ENCODE measurements at regions of chr5 and their contacts with region 1.

Region 1: DNA sequence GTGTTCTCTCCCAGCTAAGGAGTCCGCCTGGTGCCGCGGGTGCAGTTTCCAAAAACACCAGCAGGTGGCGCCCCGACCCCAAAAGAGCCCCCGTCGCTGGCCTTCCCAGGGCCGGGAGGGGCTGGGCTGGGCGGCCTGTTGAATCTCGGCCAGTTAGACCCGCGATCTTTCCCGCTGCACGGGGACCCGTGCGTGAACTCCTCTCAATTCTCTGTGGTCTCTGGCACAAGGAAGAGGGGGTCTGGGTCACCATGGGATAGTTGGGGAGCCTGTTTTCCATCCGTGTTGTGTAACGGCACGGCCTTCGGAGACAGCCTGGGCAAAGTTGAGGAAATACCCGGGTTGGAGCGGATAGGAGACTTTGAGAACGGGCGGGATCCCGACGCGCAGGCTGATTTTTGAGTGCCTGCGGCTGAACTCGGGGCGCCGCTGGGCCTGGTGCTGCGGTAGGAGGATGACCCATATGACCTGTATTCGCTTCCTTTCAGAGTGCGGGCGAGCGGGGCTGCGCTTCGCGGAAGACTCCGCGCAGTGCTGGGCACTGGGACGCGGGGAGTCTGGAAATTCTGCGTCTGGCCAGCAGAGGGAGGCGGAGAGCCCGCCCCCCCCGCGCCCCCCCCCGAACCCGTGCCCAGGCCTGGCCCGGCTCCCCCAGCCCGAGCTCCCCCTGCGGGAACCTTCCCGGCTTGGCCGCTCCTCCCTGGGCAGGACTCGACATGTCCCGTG is 7.9 kb upstream of the PSD2 start:
- DNase-seq: peak; percentile 65 to 83
- ATAC-seq: peak; percentile 77 to 79
- H3K4me3 ChIP-seq: peak overlapping the region; percentile 64 to 90 (median 67)
- H3K27ac ChIP-seq: peak overlapping the region; percentile 84 to 92 (median 88)
- H3K4me1 ChIP-seq: peaks cover 14 to 17% of the 10 kb centered on the region in 2 donors
- H3K27me3 ChIP-seq: no peaks in the 10 kb centered on the region
- CTCF ChIP-seq: peak; percentile 89 to 99 (median 97)
- POLR2A ChIP-seq: no peak

Region 2: DNA sequence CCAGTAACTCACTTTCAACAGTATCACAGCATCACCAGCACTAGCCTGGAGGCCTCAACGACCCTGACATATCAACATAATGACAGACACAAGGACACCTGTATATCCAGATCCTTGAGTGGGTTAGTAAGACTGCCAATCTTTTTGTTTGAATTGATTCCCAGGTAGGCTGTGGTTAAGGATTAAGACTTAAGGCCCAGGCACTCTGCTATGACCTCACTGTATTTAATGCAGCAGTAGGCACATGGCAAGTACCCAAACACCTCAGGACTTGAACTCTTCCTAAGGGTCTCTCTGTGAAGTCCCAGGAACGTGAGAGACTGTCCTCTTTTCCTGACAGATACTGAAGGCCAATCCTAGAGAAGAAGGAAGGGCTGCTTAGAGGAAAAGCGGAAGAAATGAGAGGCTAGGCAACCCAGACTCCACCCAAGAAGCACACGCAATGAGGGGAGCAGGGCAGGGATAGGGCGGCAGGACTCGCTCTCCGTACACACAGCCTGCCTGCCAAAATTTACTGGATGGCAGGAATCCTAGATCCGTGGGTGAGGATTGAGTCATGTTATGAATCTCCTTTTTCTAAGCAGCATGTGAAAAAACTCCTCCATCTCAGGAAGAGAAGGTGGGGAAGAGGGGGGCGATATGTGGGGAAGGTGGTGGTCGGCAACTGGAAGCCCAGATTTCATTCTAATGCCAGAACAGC is 683.0 kb before region 1 on chr5:
- in situ Hi-C with region 1: no loop called
- intact Hi-C with region 1: no loop called
- DNase-seq: peak; percentile 45 to 69
- ATAC-seq: peak; percentile 69 to 76
- H3K4me3 ChIP-seq: no peak overlapping the region
- H3K27ac ChIP-seq: peak overlapping the region; percentile 24 to 72 (median 64)
- H3K4me1 ChIP-seq: peaks cover 35 to 60% of the 10 kb centered on the region in 2 donors
- H3K27me3 ChIP-seq: no peaks in the 10 kb centered on the region
- CTCF ChIP-seq: no peak
- POLR2A ChIP-seq: no peak

Region 3: GRCh38 chr5:139849942-139850341 is 62.2 kb after region 1 on chr5:
- in situ Hi-C with region 1: loop called in 1 of 4 experiments (anchors 10 kb)
- intact Hi-C with region 1: no loop called
- DNase-seq: no peak
- ATAC-seq: no peak
- H3K4me3 ChIP-seq: no peak overlapping the region
- H3K27ac ChIP-seq: peak overlapping the region in 2 of 4 donors; percentile 9 to 18
- H3K4me1 ChIP-seq: peaks cover 0 to 11% of the 10 kb centered on the region in 2 donors
- H3K27me3 ChIP-seq: no peaks in the 10 kb centered on the region
- CTCF ChIP-seq: no peak
- POLR2A ChIP-seq: no peak

Region 4: GRCh38 chr5:139968547-139969261 is 181.0 kb after region 1 on chr5:
- in situ Hi-C with region 1: loop called (anchors 5 to 10 kb)
- intact Hi-C with region 1: loop called (anchors 1 kb)
- DNase-seq: peak; percentile 86 to 91
- ATAC-seq: peak; percentile 83 to 87
- H3K4me3 ChIP-seq: peak overlapping the region in 1 of 4 donors; percentile 17
- H3K27ac ChIP-seq: peak overlapping the region; percentile 79 to 88 (median 82)
- H3K4me1 ChIP-seq: peaks cover 36 to 61% of the 10 kb centered on the region in 2 donors
- H3K27me3 ChIP-seq: no peaks in the 10 kb centered on the region
- CTCF ChIP-seq: peak; percentile 99 to 100 (median 100)
- POLR2A ChIP-seq: no peak

Region 5: DNA sequence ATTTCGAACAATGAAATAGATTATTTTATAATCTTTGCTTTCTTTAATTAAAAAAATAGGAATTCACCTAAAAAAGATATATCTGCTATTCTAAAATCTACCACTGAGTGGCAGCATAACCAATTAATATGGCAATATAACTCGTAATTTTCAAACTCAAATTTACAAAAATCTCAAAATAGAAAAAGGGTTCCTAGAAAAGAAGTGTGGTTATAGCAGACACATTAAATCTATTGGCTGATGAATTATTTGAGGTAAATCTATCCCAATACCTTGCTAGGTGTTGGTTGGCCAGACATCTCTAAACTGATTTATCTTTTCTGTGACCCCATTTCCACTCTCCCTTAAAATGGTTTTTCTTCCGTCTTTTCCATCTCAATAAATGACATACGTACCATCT is 285.6 kb after region 1 on chr5:
- in situ Hi-C with region 1: loop called in 2 of 4 experiments (anchors 25 kb)
- intact Hi-C with region 1: loop called (anchors 5 kb)
- DNase-seq: no peak
- ATAC-seq: peak in 1 of 2 donors; percentile 16
- H3K4me3 ChIP-seq: no peak overlapping the region
- H3K27ac ChIP-seq: no peak overlapping the region
- H3K4me1 ChIP-seq: no peaks in the 10 kb centered on the region
- H3K27me3 ChIP-seq: no peaks in the 10 kb centered on the region
- CTCF ChIP-seq: peak; percentile 53 to 74 (median 64)
- POLR2A ChIP-seq: no peak

Region 6: GRCh38 chr5:140169410-140169809 is 381.7 kb after region 1 on chr5:
- in situ Hi-C with region 1: loop called in 1 of 4 experiments (anchors 10 kb)
- intact Hi-C with region 1: no loop called
- DNase-seq: no peak
- ATAC-seq: no peak
- H3K4me3 ChIP-seq: no peak overlapping the region
- H3K27ac ChIP-seq: no peak overlapping the region
- H3K4me1 ChIP-seq: peaks cover 3% of the 10 kb centered on the region in 2 donors
- H3K27me3 ChIP-seq: no peaks in the 10 kb centered on the region
- CTCF ChIP-seq: peak in 1 of 5 experiments; percentile 30
- POLR2A ChIP-seq: no peak